ENCODE measurements at regions of chr12 and their contacts with region 1.

Region 1: GRCh38 chr12:56189176-56189917 is at the start of gene SMARCC2:
- DNase-seq: peak; percentile 94 to 96
- ATAC-seq: peak; percentile 94
- H3K4me3 ChIP-seq: peak within 1 kb of the TSS; percentile 54 to 94
- H3K27ac ChIP-seq: peak within 1 kb of the TSS; percentile 62 to 99
- H3K4me1 ChIP-seq: no peaks in the 10 kb centered on the region
- H3K27me3 ChIP-seq: no peaks in the 10 kb centered on the region
- total RNA-seq, gene SMARCC2: 118 to 140 TPM

Region 2: GRCh38 chr12:56127888-56128669 is 61.3 kb before region 1 on chr12 and contains the start of gene ESYT1:
- intact Hi-C with region 1: loop called in 1 of 2 experiments (anchors 2 kb)
- DNase-seq: peak; percentile 98 to 99
- ATAC-seq: peak; percentile 96
- H3K4me3 ChIP-seq: peak within 1 kb of the TSS; percentile 50 to 67
- H3K27ac ChIP-seq: peak within 1 kb of the TSS in 1 of 2 donors; percentile 61
- H3K4me1 ChIP-seq: peaks cover 0 to 5% of the 10 kb centered on the region in 2 donors
- H3K27me3 ChIP-seq: no peaks in the 10 kb centered on the region
- total RNA-seq, gene ESYT1: 103 to 106 TPM

Region 3: DNA sequence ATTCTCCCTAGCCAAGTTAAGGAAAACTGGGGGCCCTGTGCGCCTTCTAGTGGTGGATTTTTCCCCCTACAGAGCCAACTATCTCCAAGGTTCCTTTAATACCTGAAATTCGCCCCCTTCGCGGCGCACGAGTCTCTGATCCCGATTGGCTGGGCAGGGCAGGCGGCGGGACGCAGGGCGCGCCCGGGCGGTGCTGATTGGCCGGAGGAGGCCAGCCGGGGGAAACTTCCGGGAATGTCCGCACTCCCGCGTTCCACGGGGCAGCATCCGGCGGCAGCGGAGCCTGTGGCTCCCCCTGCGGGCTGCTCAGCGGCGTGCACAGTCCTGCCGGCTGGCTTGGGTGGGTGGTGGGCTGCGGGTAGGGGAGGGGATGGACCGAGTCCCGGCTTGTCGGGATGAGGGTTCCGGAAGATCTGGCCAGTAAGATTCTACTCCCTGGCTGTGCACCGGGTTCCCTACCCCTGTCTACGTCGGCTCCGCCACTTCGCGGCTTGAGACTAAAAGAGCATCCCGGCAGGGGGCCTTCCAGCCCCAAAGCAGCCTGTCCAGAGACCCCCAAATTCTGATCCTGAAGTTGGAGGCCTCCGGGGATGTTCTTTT is 34.9 kb after region 1 on chr12 and contains the start of gene NABP2:
- intact Hi-C with region 1: loop called (anchors 1 to 5 kb)
- DNase-seq: peak; percentile 99
- ATAC-seq: peak; percentile 93
- H3K4me3 ChIP-seq: peak within 1 kb of the TSS; percentile 43 to 50
- H3K27ac ChIP-seq: peak within 1 kb of the TSS; percentile 8 to 87
- H3K4me1 ChIP-seq: no peaks in the 10 kb centered on the region
- H3K27me3 ChIP-seq: no peaks in the 10 kb centered on the region
- total RNA-seq, gene NABP2: 18.6 to 19.7 TPM

Region 4: GRCh38 chr12:56258057-56258819 is 68.9 kb after region 1 on chr12 and contains the start of gene ANKRD52:
- intact Hi-C with region 1: loop called in 1 of 2 experiments (anchors 2 kb)
- DNase-seq: peak; percentile 86 to 92
- ATAC-seq: peak; percentile 94
- H3K4me3 ChIP-seq: peak within 1 kb of the TSS; percentile 99 to 100
- H3K27ac ChIP-seq: peak within 1 kb of the TSS in 1 of 2 donors; percentile 72
- H3K4me1 ChIP-seq: peaks cover 0 to 3% of the 10 kb centered on the region in 2 donors
- H3K27me3 ChIP-seq: no peaks in the 10 kb centered on the region
- total RNA-seq, gene ANKRD52: 30.5 to 37.9 TPM